ENCODE measurements at regions of chr6 and their contacts with region 1.

Region 1: DNA sequence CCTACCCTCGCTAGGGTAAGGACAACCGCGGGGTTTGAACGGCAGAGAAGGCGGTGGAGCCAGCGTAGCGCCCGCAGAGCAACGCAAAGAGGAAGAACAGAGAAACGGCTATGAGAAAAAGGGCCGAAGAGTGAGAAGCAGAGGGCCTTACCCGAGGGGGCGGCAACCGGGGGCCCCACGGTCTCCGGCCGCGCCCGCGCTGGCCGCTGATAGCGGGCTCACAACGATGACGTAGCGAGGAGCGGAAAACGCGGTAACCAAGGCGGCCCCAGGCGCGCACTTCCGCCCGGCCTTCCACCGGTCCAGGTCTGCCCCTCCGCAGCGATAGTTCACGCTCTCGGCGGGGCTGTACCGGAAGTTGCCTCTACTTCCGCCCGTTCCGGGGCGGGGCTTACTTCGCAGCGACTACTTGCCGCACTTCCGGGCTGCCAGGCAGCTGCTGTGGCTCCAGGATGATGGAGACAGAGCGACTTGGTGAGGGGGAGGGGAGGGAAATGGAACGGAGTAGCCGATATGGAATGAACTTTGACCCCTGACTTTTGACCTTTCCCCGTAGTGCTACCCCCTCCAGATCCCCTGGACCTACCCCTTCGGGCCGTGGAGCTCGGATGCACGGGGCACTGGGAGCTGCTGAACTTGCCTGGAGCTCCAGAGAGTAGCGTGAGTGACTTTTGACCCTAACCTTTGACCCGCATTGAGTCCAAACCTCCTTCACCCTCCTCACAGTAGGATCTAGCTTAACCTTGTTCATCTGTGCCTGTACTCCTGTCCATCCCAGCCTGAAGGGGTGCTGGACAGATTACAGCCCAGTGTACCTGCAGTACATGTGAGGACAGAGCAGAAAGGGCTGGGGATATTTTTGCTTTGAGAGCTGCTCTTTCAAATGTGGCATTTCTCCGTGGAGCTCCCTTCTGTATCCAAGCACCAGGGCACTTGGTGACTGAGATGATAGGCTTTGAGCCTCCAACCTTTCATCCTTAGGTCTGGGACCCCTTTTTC is at the starts of genes NELFE and SKIC2:
- DNase-seq: peak; percentile 94 to 99 (median 98)
- ATAC-seq: peak; percentile 98
- H3K4me3 ChIP-seq: peak within 1 kb of the TSS; percentile 89
- H3K4me3 Mint-ChIP-seq: peak within 1 kb of the TSS; percentile 91 to 100 (median 97)
- H3K27ac ChIP-seq: peak within 1 kb of the TSS; percentile 99
- H3K27ac Mint-ChIP-seq: peak within 1 kb of the TSS; percentile 91 to 99 (median 97)
- H3K4me1 ChIP-seq: peaks cover 18 to 20% of the 10 kb centered on the region in 2 donors
- H3K4me1 Mint-ChIP-seq: peaks cover 23 to 50% (median 39%) of the 10 kb centered on the region in 7 donors
- H3K27me3 ChIP-seq: no peaks in the 10 kb centered on the region
- H3K27me3 Mint-ChIP-seq: no peaks in the 10 kb centered on the region
- total RNA-seq, gene NELFE: 47.5 to 71.7 (median 59.1) TPM
- total RNA-seq, gene SKIC2: 85.6 to 139 (median 101) TPM

Region 2: GRCh38 chr6:30061092-30061857 is 1897.8 kb before region 1 on chr6 and contains the start of gene POLR1H:
- CTCF ChIA-PET with region 1: no interaction called
- POLR2A ChIA-PET with region 1: no interaction called
- intact Hi-C with region 1: loop called in 1 of 2 experiments (anchors 1 kb)
- DNase-seq: peak; percentile 69 to 93 (median 86)
- ATAC-seq: peak; percentile 93
- H3K4me3 ChIP-seq: peak within 1 kb of the TSS; percentile 95
- H3K4me3 Mint-ChIP-seq: peak within 1 kb of the TSS; percentile 93 to 99 (median 98)
- H3K27ac ChIP-seq: peak within 1 kb of the TSS; percentile 92
- H3K27ac Mint-ChIP-seq: peak within 1 kb of the TSS; percentile 95 to 99 (median 99)
- H3K4me1 ChIP-seq: peaks cover 24 to 26% of the 10 kb centered on the region in 2 donors
- H3K4me1 Mint-ChIP-seq: peaks cover 17 to 63% (median 55%) of the 10 kb centered on the region in 7 donors
- H3K27me3 ChIP-seq: no peaks in the 10 kb centered on the region
- H3K27me3 Mint-ChIP-seq: no peaks in the 10 kb centered on the region
- total RNA-seq, gene POLR1H: 27.3 to 66.8 (median 45.0) TPM

Region 3: DNA sequence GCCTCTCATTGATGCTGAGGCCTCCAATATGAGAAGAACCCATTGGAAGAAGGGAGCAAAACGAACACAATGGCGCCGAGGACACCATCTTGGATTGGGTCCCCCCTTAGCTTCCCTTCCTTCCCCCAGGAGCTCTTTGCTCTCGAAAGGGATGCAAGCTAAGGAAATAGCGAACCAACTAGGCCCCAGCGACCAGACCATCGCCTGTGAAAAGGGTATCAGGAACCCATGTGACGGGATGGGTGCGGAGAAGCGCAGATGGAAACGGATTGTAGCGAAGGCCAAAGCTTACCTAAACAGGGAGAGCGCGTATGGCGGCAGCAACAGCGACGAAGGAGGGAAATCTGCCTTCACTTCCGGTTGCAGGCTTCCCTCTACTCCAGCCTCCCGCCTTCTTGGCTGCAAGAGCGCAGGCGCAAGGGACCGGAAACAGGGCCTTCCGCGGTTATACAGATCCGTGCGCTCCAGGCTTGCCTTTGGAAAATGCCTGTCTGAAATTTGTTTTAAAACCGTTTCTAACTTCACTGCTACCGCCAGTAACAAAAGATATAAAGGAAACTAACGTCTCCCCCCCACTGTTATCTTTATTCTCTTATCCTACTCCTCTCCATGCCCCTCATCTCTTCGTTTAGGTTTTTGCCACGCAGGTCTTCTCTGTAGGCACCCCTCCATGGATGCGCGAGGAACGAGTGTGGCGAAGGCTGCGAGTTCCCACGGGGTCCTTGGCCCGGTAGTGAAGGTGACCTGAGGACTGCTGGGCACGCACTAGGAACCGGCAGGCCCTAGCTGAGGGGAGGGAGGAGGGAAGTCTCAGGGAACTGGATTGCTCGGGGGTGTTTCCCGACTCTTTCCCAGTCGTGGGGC is 417.1 kb before region 1 on chr6 and contains the start of gene DDX39B:
- CTCF ChIA-PET with region 1: no interaction called
- POLR2A ChIA-PET with region 1: interaction called, 5 read pairs
- intact Hi-C with region 1: loop called (anchors 1 to 2 kb)
- DNase-seq: peak; percentile 80 to 97 (median 94)
- ATAC-seq: peak; percentile 83
- H3K4me3 ChIP-seq: peak within 1 kb of the TSS; percentile 77
- H3K4me3 Mint-ChIP-seq: peak within 1 kb of the TSS; percentile 84 to 99 (median 98)
- H3K27ac ChIP-seq: peak within 1 kb of the TSS; percentile 97
- H3K27ac Mint-ChIP-seq: peak within 1 kb of the TSS; percentile 90 to 100 (median 100)
- H3K4me1 ChIP-seq: peaks cover 34 to 45% of the 10 kb centered on the region in 2 donors
- H3K4me1 Mint-ChIP-seq: peaks cover 34 to 65% (median 55%) of the 10 kb centered on the region in 7 donors
- H3K27me3 ChIP-seq: no peaks in the 10 kb centered on the region
- H3K27me3 Mint-ChIP-seq: no peaks in the 10 kb centered on the region
- total RNA-seq, gene DDX39B: 443 to 761 (median 546) TPM

Region 4: GRCh38 chr6:31729515-31729978 is 229.5 kb before region 1 on chr6:
- CTCF ChIA-PET with region 1: no interaction called
- POLR2A ChIA-PET with region 1: no interaction called
- intact Hi-C with region 1: loop called in 1 of 2 experiments (anchors 2 kb)
- DNase-seq: peak; percentile 66 to 82 (median 77)
- ATAC-seq: peak; percentile 78
- H3K4me3 ChIP-seq: peak overlapping the region; percentile 92
- H3K4me3 Mint-ChIP-seq: peak overlapping the region; percentile 83 to 100 (median 97)
- H3K27ac ChIP-seq: peak overlapping the region; percentile 65
- H3K27ac Mint-ChIP-seq: peak overlapping the region; percentile 78 to 96 (median 89)
- H3K4me1 ChIP-seq: peaks cover 18 to 20% of the 10 kb centered on the region in 2 donors
- H3K4me1 Mint-ChIP-seq: peaks cover 20 to 65% (median 55%) of the 10 kb centered on the region in 7 donors
- H3K27me3 ChIP-seq: no peaks in the 10 kb centered on the region
- H3K27me3 Mint-ChIP-seq: no peaks in the 10 kb centered on the region

Region 5: DNA sequence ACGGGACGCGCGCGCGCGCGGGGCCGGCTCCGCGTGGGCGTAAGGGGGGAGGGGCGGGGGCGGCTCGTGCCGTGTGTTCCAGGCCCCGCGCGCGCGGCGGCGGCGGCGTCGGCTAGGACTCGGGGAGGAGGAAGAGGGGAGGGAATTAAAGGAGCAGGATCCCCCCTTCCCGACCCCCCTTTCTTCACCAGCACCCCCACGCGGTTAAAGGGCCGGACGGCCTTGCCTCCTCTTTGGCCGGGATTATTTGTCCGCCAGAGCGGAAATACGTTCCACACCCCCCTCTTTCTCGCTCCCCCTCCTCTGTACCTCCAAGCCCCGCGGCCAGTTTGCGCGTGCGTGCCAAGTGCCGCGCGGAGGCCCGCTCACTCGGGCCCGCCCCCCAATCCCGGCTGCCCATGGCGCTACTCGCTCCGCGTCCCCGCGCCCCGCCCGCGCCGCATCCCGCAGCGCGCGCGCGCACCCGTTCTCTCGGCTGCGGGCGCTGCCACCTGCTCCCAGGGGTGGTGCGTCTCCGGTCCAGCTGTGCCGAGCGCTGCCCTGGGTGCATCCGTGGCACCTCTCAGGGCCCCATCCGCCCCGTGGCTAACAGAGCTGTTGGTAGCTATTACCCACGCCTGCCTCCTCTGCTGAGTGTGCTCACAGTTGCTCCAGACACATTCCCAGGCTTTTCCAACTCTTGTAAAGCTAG is 56.9 kb before region 1 on chr6 and contains the start of gene ZBTB12:
- CTCF ChIA-PET with region 1: interaction called, 3 read pairs
- POLR2A ChIA-PET with region 1: interaction called, 10 read pairs
- intact Hi-C with region 1: loop called (anchors 1 kb)
- DNase-seq: peak; percentile 76 to 90 (median 84)
- ATAC-seq: peak; percentile 76
- H3K4me3 ChIP-seq: peak within 1 kb of the TSS; percentile 80
- H3K4me3 Mint-ChIP-seq: peak within 1 kb of the TSS; percentile 81 to 96 (median 88)
- H3K27ac ChIP-seq: peak within 1 kb of the TSS; percentile 83
- H3K27ac Mint-ChIP-seq: peak within 1 kb of the TSS; percentile 75 to 94 (median 86)
- H3K4me1 ChIP-seq: peaks cover 12 to 16% of the 10 kb centered on the region in 2 donors
- H3K4me1 Mint-ChIP-seq: peaks cover 18 to 34% (median 32%) of the 10 kb centered on the region in 7 donors
- H3K27me3 ChIP-seq: no peaks in the 10 kb centered on the region
- H3K27me3 Mint-ChIP-seq: peaks cover 0 to 11% (median 0%) of the 10 kb centered on the region in 5 donors
- total RNA-seq, gene ZBTB12: 0.77 to 4.5 (median 2.5) TPM

Region 6: DNA sequence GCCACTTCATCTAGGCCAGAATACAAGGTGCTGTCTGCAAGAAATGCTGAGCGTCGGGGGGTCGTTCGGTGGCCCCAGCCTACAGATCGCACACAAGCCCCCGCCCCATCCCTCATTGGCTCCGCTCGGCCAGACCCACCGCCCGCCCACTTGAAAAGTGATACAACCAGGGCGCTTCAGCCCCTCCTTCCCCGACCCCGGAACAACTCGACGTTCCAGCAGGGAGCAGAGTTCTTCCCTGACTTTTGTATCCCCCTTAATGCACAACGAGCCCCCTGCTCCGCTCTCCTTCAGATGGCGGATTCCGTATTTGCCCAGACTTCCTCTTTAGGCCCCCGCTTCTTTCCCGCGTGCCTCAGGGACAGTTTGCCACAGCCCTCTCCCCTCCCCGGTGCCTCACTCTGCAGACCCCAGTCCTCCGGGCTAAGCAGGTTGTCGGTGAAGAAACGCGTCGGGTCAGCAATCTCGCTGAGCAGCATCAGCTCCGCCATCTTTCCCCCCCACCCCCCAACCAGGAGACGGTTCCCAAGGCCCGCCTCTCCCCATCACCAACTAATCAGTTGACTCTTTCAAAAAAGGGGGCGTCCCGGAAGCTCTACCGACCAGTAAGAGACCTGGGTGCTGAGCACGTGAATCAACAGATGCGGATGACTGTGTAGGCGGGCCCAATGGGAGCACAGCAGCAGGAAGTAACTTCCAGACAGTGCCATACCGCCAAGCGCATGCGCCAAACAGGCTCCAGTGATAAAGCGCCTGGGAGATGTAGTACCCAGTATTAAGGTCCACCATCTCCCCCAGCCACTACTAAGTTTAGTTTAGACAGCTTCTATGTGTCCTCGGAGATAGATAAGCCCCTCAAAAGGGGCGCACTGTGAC is 168.9 kb after region 1 on chr6 and contains the start of gene ATF6B:
- CTCF ChIA-PET with region 1: no interaction called
- POLR2A ChIA-PET with region 1: interaction called, 4 read pairs
- intact Hi-C with region 1: loop called (anchors 1 kb)
- DNase-seq: peak; percentile 80 to 100 (median 96)
- ATAC-seq: peak; percentile 97
- H3K4me3 ChIP-seq: peak within 1 kb of the TSS; percentile 96
- H3K4me3 Mint-ChIP-seq: peak within 1 kb of the TSS; percentile 96 to 100 (median 98)
- H3K27ac ChIP-seq: peak within 1 kb of the TSS; percentile 92
- H3K27ac Mint-ChIP-seq: peak within 1 kb of the TSS; percentile 83 to 98 (median 97)
- H3K4me1 ChIP-seq: peaks cover 33% of the 10 kb centered on the region in 2 donors
- H3K4me1 Mint-ChIP-seq: peaks cover 38 to 66% (median 53%) of the 10 kb centered on the region in 7 donors
- H3K27me3 ChIP-seq: no peaks in the 10 kb centered on the region
- H3K27me3 Mint-ChIP-seq: peaks cover 0 to 4% (median 0%) of the 10 kb centered on the region in 5 donors
- total RNA-seq, gene ATF6B: 115 to 168 (median 142) TPM

Region 7: DNA sequence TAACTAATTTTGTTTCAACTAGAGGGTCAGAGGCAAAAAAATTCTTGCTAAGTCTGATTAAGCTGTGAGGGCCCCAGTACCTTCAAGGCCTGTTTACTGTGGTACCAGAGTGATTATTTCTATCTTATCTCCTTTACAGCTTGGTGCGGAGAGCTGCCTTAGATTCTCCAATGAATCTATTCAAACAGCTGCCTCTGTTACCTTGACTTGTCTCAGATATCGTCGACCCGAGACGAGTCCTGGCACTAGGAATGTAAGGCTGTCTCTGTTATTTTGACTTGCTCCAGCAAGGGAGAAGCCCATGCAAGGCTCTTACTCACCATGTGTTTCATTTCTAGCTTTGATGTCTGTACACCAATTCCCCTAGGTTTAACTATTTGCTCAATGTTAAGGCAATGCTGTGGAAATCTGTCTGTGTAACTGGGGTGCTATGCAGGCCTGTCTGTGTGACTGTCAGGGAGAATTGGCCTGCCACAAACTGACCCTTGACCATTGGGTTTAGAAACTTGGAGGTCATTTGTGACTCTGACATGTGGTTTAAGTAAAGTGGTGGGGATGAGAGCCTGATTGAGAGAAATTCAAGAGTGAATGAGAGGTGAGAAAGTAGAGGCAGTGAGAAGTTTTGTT is 181.5 kb after region 1 on chr6:
- CTCF ChIA-PET with region 1: no interaction called
- POLR2A ChIA-PET with region 1: no interaction called
- intact Hi-C with region 1: no loop called
- DNase-seq: no peak
- ATAC-seq: no peak
- H3K4me3 ChIP-seq: no peak overlapping the region
- H3K4me3 Mint-ChIP-seq: no peak overlapping the region
- H3K27ac ChIP-seq: no peak overlapping the region
- H3K27ac Mint-ChIP-seq: no peak overlapping the region
- H3K4me1 ChIP-seq: no peaks in the 10 kb centered on the region
- H3K4me1 Mint-ChIP-seq: peaks cover 0 to 9% (median 0%) of the 10 kb centered on the region in 7 donors
- H3K27me3 ChIP-seq: no peaks in the 10 kb centered on the region
- H3K27me3 Mint-ChIP-seq: peaks cover 0 to 8% (median 0%) of the 10 kb centered on the region in 5 donors

Region 8: DNA sequence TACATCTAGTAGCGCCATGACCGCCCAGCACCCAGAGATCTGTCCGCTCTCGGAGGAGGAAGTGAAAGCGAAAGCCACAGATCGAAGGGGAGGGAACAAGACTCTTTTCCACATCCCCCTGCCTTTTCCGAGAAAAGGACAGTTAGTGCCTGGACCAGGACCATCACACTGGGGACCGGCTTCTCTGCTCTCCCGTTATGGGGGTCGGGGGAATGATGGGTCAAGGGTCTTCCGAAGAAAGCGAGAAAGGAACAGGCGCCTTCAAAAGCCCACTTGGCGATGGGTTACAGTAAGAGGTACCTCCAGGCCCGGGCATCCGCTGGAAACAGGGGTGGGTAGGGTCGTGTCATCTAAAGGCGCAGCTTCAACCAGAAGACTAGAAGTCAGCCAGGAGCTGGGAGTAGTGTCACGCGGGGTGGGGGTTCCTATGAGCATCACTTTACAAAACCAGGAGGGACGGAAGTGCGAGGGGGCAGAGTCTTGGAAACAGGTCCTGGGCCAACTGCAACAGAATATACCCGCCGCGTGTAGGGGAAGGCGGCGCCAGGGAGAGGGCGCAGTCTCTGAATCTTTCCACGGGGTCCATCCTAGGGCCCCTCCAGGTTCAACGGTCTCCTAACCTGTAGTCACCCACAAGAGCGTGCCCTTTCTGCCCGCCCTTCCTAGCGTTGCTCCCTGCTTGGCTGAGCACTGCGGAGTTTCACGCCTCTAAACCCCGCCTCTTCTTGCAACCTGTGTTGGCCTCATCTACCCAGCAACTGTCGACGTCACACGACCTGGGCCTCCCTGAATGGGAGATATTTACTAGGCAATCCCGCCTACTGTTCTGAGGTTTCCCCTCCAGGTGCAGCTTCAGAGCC is 885.2 kb after region 1 on chr6 and contains the start of gene PSMB8:
- CTCF ChIA-PET with region 1: no interaction called
- POLR2A ChIA-PET with region 1: no interaction called
- intact Hi-C with region 1: loop called in 1 of 2 experiments (anchors 5 kb)
- DNase-seq: peak; percentile 92 to 99 (median 97)
- ATAC-seq: peak; percentile 90
- H3K4me3 ChIP-seq: peak within 1 kb of the TSS; percentile 97
- H3K4me3 Mint-ChIP-seq: peak within 1 kb of the TSS; percentile 92 to 99 (median 98)
- H3K27ac ChIP-seq: peak within 1 kb of the TSS; percentile 97
- H3K27ac Mint-ChIP-seq: peak within 1 kb of the TSS; percentile 99 to 100 (median 100)
- H3K4me1 ChIP-seq: peaks cover 71 to 72% of the 10 kb centered on the region in 2 donors
- H3K4me1 Mint-ChIP-seq: peaks cover 66 to 83% (median 79%) of the 10 kb centered on the region in 7 donors
- H3K27me3 ChIP-seq: no peaks in the 10 kb centered on the region
- H3K27me3 Mint-ChIP-seq: no peaks in the 10 kb centered on the region
- total RNA-seq, gene PSMB8: 111 to 419 (median 115) TPM